CD8-positive, alpha-beta T cell (primary cell): ENCODE measurements at regions of chr7 and their contacts with region 1.

Region 1: DNA sequence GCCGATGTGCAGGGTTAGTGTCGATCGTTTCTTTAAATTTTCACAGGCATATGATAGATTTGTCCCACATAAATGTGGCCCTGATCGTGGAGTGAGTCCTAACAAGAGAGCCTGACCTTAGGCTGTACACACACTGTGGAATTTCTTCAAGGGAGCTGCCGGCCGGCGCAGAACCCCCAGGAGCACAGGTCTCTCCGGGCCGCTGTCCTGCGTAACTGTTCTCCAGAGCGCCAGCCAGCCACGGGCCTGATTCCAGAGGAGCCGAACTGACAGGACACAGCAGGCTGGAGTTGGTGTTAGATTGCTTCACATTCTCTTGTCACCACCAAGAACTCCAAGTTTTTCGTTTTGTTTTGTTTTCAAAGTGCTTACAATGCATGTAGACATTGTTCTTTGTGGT is 37.3 kb downstream of the SHH start:
- DNase-seq: no peak
- ATAC-seq: no peak
- H3K4me3 ChIP-seq: no peak overlapping the region
- H3K4me3 Mint-ChIP-seq: no peak overlapping the region
- H3K27ac ChIP-seq: no peak overlapping the region
- H3K27ac Mint-ChIP-seq: no peak overlapping the region
- H3K4me1 ChIP-seq: no peaks in the 10 kb centered on the region
- H3K4me1 Mint-ChIP-seq: no peaks in the 10 kb centered on the region
- H3K27me3 ChIP-seq: no peaks in the 10 kb centered on the region
- H3K27me3 Mint-ChIP-seq: no peaks in the 10 kb centered on the region
- CTCF ChIP-seq: no peak

Region 2: DNA sequence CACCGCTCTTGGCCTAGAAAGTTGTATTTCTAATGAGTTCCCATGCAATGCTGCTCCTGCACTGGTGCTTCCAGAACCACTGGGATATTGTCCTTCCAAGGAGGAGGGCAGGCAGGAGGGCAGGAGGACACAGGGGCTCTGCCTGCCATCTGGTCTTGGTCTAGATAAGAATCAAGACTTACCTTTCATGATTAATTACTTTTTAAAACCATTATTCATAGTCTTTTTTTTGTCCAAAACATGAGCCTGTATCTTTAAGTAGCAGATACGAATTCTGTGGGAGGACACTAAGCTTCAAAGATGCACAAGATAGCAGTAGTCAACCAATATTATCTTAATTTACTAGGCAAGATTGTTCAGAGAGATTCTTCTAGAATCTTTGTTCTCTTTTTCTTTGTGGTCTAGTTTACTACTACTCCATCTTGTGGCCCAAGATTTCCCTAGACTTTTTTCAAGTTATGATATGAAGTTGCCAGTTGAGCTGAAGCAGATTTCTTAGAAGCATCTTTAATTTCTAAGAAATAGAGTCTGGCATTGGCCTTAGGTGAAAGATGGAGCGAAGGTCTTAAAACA is 72.9 kb before region 1 on chr7:
- CTCF ChIA-PET with region 1: no interaction called
- POLR2A ChIA-PET with region 1: no interaction called
- intact Hi-C with region 1: loop called in 1 of 2 experiments (anchors 2 kb)
- DNase-seq: no peak
- ATAC-seq: no peak
- H3K4me3 ChIP-seq: no peak overlapping the region
- H3K4me3 Mint-ChIP-seq: no peak overlapping the region
- H3K27ac ChIP-seq: no peak overlapping the region
- H3K27ac Mint-ChIP-seq: no peak overlapping the region
- H3K4me1 ChIP-seq: no peaks in the 10 kb centered on the region
- H3K4me1 Mint-ChIP-seq: peaks cover 32% of the 10 kb centered on the region
- H3K27me3 ChIP-seq: no peaks in the 10 kb centered on the region
- H3K27me3 Mint-ChIP-seq: no peaks in the 10 kb centered on the region
- CTCF ChIP-seq: no peak

Region 3: DNA sequence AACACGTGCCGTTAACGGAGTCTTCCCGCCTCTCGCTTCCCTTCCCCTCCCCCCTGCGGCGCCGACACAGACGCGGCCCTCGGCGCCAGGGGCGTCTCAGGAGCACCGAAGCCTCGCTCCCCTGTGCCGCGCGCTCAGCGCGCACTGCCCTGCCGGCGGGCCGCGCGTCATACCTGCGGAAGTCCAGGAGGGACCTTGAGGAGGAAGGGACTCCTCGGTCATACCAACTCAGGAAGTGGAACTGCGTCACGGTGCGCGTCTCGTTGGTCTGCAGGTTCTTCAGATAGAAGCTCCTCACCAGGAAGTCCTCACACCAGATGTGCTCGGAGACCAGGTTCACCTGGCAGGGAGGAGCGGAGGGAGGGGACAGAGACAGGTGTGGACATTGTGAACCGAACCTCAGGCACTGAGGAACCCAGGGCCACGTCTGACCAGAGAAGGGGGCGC is 1801.5 kb after region 1 on chr7:
- CTCF ChIA-PET with region 1: no interaction called
- POLR2A ChIA-PET with region 1: no interaction called
- intact Hi-C with region 1: loop called in 1 of 2 experiments (anchors 5 kb)
- DNase-seq: peak; percentile 29 to 73 (median 60)
- ATAC-seq: peak; percentile 79
- H3K4me3 ChIP-seq: peak overlapping the region; percentile 20 to 44
- H3K4me3 Mint-ChIP-seq: peak overlapping the region; percentile 74
- H3K27ac ChIP-seq: peak overlapping the region in 1 of 2 experiments; percentile 68
- H3K27ac Mint-ChIP-seq: peak overlapping the region; percentile 75
- H3K4me1 ChIP-seq: peaks cover 12% of the 10 kb centered on the region
- H3K4me1 Mint-ChIP-seq: peaks cover 18% of the 10 kb centered on the region
- H3K27me3 ChIP-seq: peaks cover 0 to 6% of the 10 kb centered on the region in 2 experiments
- H3K27me3 Mint-ChIP-seq: peaks cover 3% of the 10 kb centered on the region
- CTCF ChIP-seq: no peak